A549 (cell line): ENCODE measurements at regions of chr14 and their contacts with region 1.

Region 1: GRCh38 chr14:35404449-35405303 is at the start of gene NFKBIA:
- DNase-seq: peak; percentile 79 to 88
- ATAC-seq: peak; percentile 80 to 81
- H3K4me3 ChIP-seq: peak within 1 kb of the TSS; percentile 97
- H3K27ac ChIP-seq: peak within 1 kb of the TSS; percentile 99
- H3K4me1 ChIP-seq: peaks cover 53% of the 10 kb centered on the region
- CTCF ChIP-seq: peak; percentile 48
- EP300 ChIP-seq: no peak
- POLR2A ChIP-seq: peak; percentile 94
- RAD21 ChIP-seq: peak in 1 of 2 experiments; percentile 46; a peak in 2 of 5 replicates
- polyA plus RNA-seq, gene NFKBIA: 65.0 and 102 TPM in 2 replicates

Region 2: GRCh38 chr14:35046048-35046741 is 358.5 kb before region 1 on chr14 and contains the start of gene FAM177A1:
- CTCF ChIA-PET with region 1: interaction called, 6 read pairs
- POLR2A ChIA-PET with region 1: interaction called, 34 read pairs
- DNase-seq: peak; percentile 96 to 98
- ATAC-seq: peak; percentile 93 to 97
- H3K4me3 ChIP-seq: peak within 1 kb of the TSS; percentile 82
- H3K27ac ChIP-seq: peak within 1 kb of the TSS; percentile 92 to 93
- H3K4me1 ChIP-seq: peaks cover 42% of the 10 kb centered on the region
- CTCF ChIP-seq: no peak
- EP300 ChIP-seq: no peak
- POLR2A ChIP-seq: peak; percentile 87
- RAD21 ChIP-seq: peak in 1 of 2 experiments; percentile 7; a peak in 1 of 5 replicates
- polyA plus RNA-seq, gene FAM177A1: 79.8 and 102 TPM in 2 replicates

Region 3: DNA sequence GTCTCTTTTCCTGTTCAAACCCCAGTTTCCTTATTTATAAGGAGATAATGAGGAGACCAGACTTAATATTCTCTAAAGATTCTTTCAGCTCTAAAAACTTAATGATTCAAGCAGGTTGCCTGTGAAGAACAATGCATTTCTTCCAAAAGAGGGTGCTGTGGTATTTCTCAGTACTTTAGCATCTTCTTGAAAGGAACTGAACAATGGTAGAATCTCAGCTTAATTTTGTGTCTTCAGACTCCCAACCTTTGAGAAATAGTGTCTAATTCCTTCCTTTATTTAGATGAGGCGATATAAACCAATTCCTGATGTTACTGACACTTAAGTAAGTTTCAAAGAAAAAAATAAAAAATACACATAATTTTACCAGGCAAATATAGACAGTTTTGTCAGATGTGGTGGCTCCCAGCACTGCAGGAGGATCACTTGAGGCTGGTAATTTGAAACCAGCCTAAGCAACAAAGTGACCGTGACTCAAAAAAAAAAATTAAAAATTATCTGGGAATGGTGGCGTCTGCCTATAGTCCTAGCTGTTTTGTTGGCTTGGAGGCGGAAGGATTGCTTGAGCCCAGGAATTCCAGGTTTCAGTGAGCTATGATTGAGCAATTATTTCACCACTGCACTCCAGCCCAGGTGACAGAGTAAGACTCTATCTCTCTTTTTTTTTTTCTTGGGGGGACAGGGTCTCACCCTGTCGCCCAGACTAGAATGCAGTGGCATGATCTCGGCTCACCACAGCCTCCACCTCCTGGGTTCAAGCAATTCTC is 189.4 kb before region 1 on chr14:
- CTCF ChIA-PET with region 1: interaction called, 71 read pairs
- POLR2A ChIA-PET with region 1: interaction called, 25 read pairs
- DNase-seq: peak; percentile 36 to 69
- ATAC-seq: peak; percentile 66 to 88; a peak in 4 of 6 replicates
- H3K4me3 ChIP-seq: no peak overlapping the region
- H3K27ac ChIP-seq: peak overlapping the region; percentile 69 to 75; a peak in 5 of 6 replicates
- H3K4me1 ChIP-seq: peaks cover 33% of the 10 kb centered on the region
- CTCF ChIP-seq: peak; percentile 73
- EP300 ChIP-seq: no peak
- POLR2A ChIP-seq: no peak
- RAD21 ChIP-seq: peak; percentile 77 to 81

Region 4: GRCh38 chr14:35292051-35292769 is 112.5 kb before region 1 on chr14 and contains the start of gene PSMA6:
- CTCF ChIA-PET with region 1: interaction called, 16 read pairs
- POLR2A ChIA-PET with region 1: interaction called, 62 read pairs
- DNase-seq: peak; percentile 93 to 99
- ATAC-seq: peak; percentile 97 to 100
- H3K4me3 ChIP-seq: peak within 1 kb of the TSS; percentile 76
- H3K27ac ChIP-seq: peak within 1 kb of the TSS; percentile 91 to 92
- H3K4me1 ChIP-seq: peaks cover 40% of the 10 kb centered on the region
- CTCF ChIP-seq: no peak
- EP300 ChIP-seq: no peak
- POLR2A ChIP-seq: peak; percentile 34
- RAD21 ChIP-seq: no peak
- polyA plus RNA-seq, gene PSMA6: 321 and 369 TPM in 2 replicates

Region 5: DNA sequence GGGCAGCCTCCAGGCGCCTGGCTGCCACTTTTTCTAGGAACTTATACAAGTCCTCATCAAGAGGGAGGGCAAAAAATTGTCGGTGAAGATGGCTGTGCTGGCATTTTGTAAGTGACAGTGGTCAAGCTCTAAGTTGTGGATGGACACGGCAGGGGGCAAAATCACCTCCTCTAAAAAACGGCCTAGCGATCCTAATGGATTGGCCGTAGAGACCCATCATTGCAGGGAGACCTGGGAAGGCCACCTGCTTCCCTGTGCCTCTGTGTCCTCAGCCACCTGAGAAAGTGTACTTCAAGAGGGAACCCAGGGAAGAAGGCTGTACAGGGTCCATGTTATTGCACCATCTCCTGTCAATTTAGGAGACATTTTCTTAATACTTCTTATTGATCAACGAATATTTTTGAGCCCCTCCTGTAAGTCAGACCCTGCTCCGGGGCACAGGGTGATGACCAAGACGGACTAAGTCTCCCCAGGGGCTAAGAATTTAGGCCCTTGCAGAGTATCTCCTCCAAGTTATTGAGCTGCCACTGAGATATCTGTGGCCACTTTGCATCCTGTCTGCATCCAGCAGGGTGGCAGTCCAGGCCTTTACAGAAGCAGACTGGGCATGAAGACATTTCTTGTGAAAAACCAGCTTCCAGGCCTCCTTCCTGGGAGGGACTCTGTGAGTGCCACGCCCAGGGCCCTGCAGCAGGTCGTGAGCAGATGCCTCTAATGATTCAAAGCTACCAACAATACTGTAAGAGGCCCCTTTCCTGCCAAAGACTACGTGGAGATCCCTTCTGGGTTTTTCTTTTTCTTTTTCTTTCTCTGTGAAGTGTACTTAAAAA is 71.9 kb before region 1 on chr14:
- CTCF ChIA-PET with region 1: interaction called, 5 read pairs
- POLR2A ChIA-PET with region 1: interaction called, 45 read pairs
- DNase-seq: peak in 1 of 2 experiments; percentile 58
- ATAC-seq: no peak
- H3K4me3 ChIP-seq: no peak overlapping the region
- H3K27ac ChIP-seq: peak overlapping the region; percentile 91 to 97
- H3K4me1 ChIP-seq: peaks cover 60% of the 10 kb centered on the region
- CTCF ChIP-seq: no peak
- EP300 ChIP-seq: no peak
- POLR2A ChIP-seq: no peak
- RAD21 ChIP-seq: no peak

Region 6: GRCh38 chr14:35374273-35374681 is 30.4 kb before region 1 on chr14:
- CTCF ChIA-PET with region 1: interaction called, 10 read pairs
- POLR2A ChIA-PET with region 1: interaction called, 49 read pairs
- DNase-seq: peak; percentile 85 to 96
- ATAC-seq: peak; percentile 76 to 83
- H3K4me3 ChIP-seq: no peak overlapping the region
- H3K27ac ChIP-seq: peak overlapping the region; percentile 88 to 91
- H3K4me1 ChIP-seq: peaks cover 45% of the 10 kb centered on the region
- CTCF ChIP-seq: no peak
- EP300 ChIP-seq: peak; percentile 90 to 93; a peak in 3 of 5 replicates
- POLR2A ChIP-seq: no peak
- RAD21 ChIP-seq: peak in 1 of 2 experiments; percentile 63; a peak in 4 of 5 replicates

Region 7: DNA sequence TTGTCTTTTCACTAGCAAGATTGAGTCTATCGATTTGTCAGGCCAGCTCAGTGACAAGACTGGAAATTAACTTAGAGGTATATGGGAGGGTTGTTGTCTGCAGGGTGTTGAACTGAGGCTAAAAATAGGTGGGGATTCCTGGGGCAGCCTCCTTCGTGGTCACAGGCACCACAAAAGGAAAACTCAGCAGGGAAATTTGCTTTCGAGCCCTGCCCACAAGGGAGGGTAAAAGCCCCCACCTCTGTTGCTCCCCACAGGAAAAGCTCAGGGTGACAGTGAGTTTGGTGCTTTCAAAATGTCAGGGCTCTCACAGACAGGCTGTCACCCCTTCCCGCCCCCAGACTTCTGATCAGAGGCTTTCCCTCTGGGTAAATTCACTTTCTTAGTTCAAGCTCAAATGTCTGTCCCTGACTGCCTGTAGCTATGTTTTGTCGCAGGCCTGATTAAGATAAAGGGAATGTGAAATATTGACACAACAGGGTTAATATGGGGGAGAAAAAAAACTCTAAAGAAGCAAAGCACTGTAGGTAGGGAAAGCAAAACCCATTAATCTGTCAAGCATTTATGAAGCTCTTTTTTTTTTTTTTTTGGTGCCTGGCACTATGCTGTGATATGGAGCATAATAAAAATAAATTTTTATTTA is 11.6 kb after region 1 on chr14:
- CTCF ChIA-PET with region 1: interaction called, 41 read pairs
- POLR2A ChIA-PET with region 1: interaction called, 6 read pairs
- DNase-seq: no peak
- ATAC-seq: no peak
- H3K4me3 ChIP-seq: no peak overlapping the region
- H3K27ac ChIP-seq: peak overlapping the region in 1 of 2 experiments; percentile 53; a peak in 2 of 6 replicates
- H3K4me1 ChIP-seq: peaks cover 37% of the 10 kb centered on the region
- CTCF ChIP-seq: no peak
- EP300 ChIP-seq: no peak
- POLR2A ChIP-seq: no peak
- RAD21 ChIP-seq: no peak

Region 8: GRCh38 chr14:35470755-35471154 is 66.1 kb after region 1 on chr14:
- CTCF ChIA-PET with region 1: no interaction called
- POLR2A ChIA-PET with region 1: no interaction called
- DNase-seq: no peak
- ATAC-seq: no peak
- H3K4me3 ChIP-seq: no peak overlapping the region
- H3K27ac ChIP-seq: no peak overlapping the region
- H3K4me1 ChIP-seq: no peaks in the 10 kb centered on the region
- CTCF ChIP-seq: no peak
- EP300 ChIP-seq: no peak
- POLR2A ChIP-seq: no peak
- RAD21 ChIP-seq: no peak

Region 9: GRCh38 chr14:35727764-35728163 is 323.1 kb after region 1 on chr14:
- CTCF ChIA-PET with region 1: no interaction called
- POLR2A ChIA-PET with region 1: no interaction called
- DNase-seq: no peak
- ATAC-seq: no peak
- H3K4me3 ChIP-seq: no peak overlapping the region
- H3K27ac ChIP-seq: no peak overlapping the region
- H3K4me1 ChIP-seq: peaks cover 19% of the 10 kb centered on the region
- CTCF ChIP-seq: no peak
- EP300 ChIP-seq: no peak
- POLR2A ChIP-seq: no peak
- RAD21 ChIP-seq: no peak